ENCODE measurements at regions of chr11 and their contacts with region 1.

Region 1: GRCh38 chr11:55714982-55715888 is 53.2 kb downstream of the OR4C6 start:
- DNase-seq: no peak
- ATAC-seq: no peak
- H3K4me3 ChIP-seq: no peak overlapping the region
- H3K27ac ChIP-seq: no peak overlapping the region
- H3K4me1 ChIP-seq: no peaks in the 10 kb centered on the region
- H3K27me3 ChIP-seq: no peaks in the 10 kb centered on the region
- CTCF ChIP-seq: no peak
- POLR2A ChIP-seq: no peak
- RAD21 ChIP-seq: no peak

Region 2: GRCh38 chr11:55652560-55652959 is 62.7 kb before region 1 on chr11:
- CTCF ChIA-PET with region 1: no interaction called
- POLR2A ChIA-PET with region 1: no interaction called
- dilution Hi-C with region 1: no loop called
- in situ Hi-C with region 1: no loop called
- intact Hi-C with region 1: no loop called
- DNase-seq: no peak
- ATAC-seq: no peak
- H3K4me3 ChIP-seq: no peak overlapping the region
- H3K27ac ChIP-seq: no peak overlapping the region
- H3K4me1 ChIP-seq: no peaks in the 10 kb centered on the region
- H3K27me3 ChIP-seq: no peaks in the 10 kb centered on the region
- CTCF ChIP-seq: no peak
- POLR2A ChIP-seq: no peak
- RAD21 ChIP-seq: no peak

Region 3: DNA sequence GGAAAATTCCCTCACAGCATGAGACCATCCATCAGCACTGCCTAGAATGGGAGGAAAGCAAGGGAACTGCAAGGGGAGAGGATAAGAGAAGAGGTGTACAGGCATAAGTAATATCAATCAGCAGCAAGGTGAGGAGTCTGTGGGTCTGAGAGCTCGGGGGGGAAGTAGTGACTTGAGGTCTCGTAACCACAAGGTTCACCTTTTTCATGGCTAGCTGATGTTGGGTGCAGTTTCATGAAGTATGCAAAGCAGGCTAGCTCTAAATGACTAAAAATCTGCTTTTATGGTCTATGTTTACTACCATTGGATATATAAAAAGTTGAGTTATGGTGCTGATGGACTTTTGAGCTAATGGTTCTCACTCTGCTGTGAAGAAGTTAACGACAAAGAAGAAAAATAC is 17.4 kb before region 1 on chr11:
- CTCF ChIA-PET with region 1: no interaction called
- POLR2A ChIA-PET with region 1: no interaction called
- dilution Hi-C with region 1: no loop called
- in situ Hi-C with region 1: no loop called
- intact Hi-C with region 1: loop called (anchors 2 kb)
- DNase-seq: no peak
- ATAC-seq: no peak
- H3K4me3 ChIP-seq: no peak overlapping the region
- H3K27ac ChIP-seq: no peak overlapping the region
- H3K4me1 ChIP-seq: no peaks in the 10 kb centered on the region
- H3K27me3 ChIP-seq: no peaks in the 10 kb centered on the region
- CTCF ChIP-seq: no peak
- POLR2A ChIP-seq: no peak
- RAD21 ChIP-seq: no peak

Region 4: DNA sequence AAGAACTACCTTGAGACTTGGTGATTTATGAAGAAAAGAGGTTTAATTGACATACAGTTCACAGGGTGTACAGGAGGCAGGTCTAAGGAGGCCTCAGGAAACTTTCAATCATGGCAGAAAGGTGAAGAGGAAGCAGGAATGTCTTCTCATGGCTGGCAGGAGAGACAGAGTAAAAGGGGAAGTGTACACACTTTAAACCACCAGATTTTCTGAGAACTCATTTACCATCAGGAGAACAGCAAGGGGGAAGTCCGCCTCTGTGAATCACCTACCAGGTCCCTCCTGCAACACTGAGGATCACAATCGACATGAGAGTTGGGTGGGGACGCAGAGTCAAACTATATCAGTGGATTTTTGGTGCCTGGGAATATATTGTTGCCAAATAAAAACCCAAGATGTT is 17.7 kb after region 1 on chr11:
- CTCF ChIA-PET with region 1: no interaction called
- POLR2A ChIA-PET with region 1: no interaction called
- dilution Hi-C with region 1: no loop called
- in situ Hi-C with region 1: no loop called
- intact Hi-C with region 1: no loop called
- DNase-seq: no peak
- ATAC-seq: no peak
- H3K4me3 ChIP-seq: no peak overlapping the region
- H3K27ac ChIP-seq: no peak overlapping the region
- H3K4me1 ChIP-seq: no peaks in the 10 kb centered on the region
- H3K27me3 ChIP-seq: no peaks in the 10 kb centered on the region
- CTCF ChIP-seq: no peak
- POLR2A ChIP-seq: no peak
- RAD21 ChIP-seq: no peak

Region 5: GRCh38 chr11:55914482-55914881 is 199.2 kb after region 1 on chr11 and contains the start of gene OR5W2:
- CTCF ChIA-PET with region 1: no interaction called
- POLR2A ChIA-PET with region 1: no interaction called
- dilution Hi-C with region 1: no loop called
- in situ Hi-C with region 1: no loop called
- intact Hi-C with region 1: no loop called
- DNase-seq: no peak
- ATAC-seq: no peak
- H3K4me3 ChIP-seq: no peak within 1 kb of the TSS
- H3K27ac ChIP-seq: no peak within 1 kb of the TSS
- H3K4me1 ChIP-seq: no peaks in the 10 kb centered on the region
- H3K27me3 ChIP-seq: no peaks in the 10 kb centered on the region
- CTCF ChIP-seq: no peak
- POLR2A ChIP-seq: no peak
- RAD21 ChIP-seq: no peak
- total RNA-seq, gene OR5W2: not detected in 2 replicates

Measured in IMR-90 (cell line).